ENCODE measurements at regions of chr1 and their contacts with region 1.

Region 1: GRCh38 chr1:162854245-162854882 is 6.6 kb downstream of the CCDC190 start:
- DNase-seq: peak in 4 of 5 donors; percentile 41 to 52 (median 46)
- ATAC-seq: peak in 3 of 4 donors; percentile 37 to 71 (median 58)
- H3K4me3 ChIP-seq: no peak overlapping the region
- H3K27ac ChIP-seq: no peak overlapping the region
- H3K4me1 ChIP-seq: no peaks in the 10 kb centered on the region
- H3K27me3 ChIP-seq: no peaks in the 10 kb centered on the region
- CTCF ChIP-seq: peak; percentile 45 to 81 (median 71)
- POLR2A ChIP-seq: no peak

Region 2: DNA sequence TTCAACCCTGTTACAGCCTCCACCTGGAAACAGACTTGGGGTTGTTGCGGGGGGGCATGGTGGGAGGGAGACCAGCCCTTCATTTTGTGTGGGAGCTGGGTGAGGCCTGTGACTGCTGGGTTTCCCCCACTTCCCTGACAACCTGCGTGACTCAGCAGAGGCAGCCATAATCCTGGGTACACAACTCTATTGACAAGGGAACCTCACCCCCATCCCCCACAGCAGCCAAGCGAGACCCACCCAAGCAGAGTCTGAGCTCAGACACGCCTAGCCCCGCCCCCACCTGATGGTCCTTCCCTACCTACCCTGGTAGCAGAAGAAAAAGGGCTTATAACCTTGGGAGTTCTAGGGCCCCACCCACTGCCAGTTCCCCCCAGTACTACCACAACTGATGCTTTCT is 14.6 kb after region 1 on chr1:
- intact Hi-C with region 1: loop called in 1 of 10 experiments (anchors 1 kb)
- DNase-seq: no peak
- ATAC-seq: no peak
- H3K4me3 ChIP-seq: no peak overlapping the region
- H3K27ac ChIP-seq: no peak overlapping the region
- H3K4me1 ChIP-seq: no peaks in the 10 kb centered on the region
- H3K27me3 ChIP-seq: peaks cover 0 to 4% (median 0%) of the 10 kb centered on the region in 9 donors
- CTCF ChIP-seq: no peak
- POLR2A ChIP-seq: no peak

Region 3: GRCh38 chr1:162905174-162906158 is 51.1 kb after region 1 on chr1:
- intact Hi-C with region 1: no loop called
- DNase-seq: no peak
- ATAC-seq: peak in 2 of 4 donors; percentile 40 to 61
- H3K4me3 ChIP-seq: no peak overlapping the region
- H3K27ac ChIP-seq: peak overlapping the region in 7 of 12 donors; percentile 3 to 62 (median 42)
- H3K4me1 ChIP-seq: peaks cover 0 to 26% (median 7%) of the 10 kb centered on the region in 12 donors
- H3K27me3 ChIP-seq: no peaks in the 10 kb centered on the region
- CTCF ChIP-seq: no peak
- POLR2A ChIP-seq: no peak

Region 4: DNA sequence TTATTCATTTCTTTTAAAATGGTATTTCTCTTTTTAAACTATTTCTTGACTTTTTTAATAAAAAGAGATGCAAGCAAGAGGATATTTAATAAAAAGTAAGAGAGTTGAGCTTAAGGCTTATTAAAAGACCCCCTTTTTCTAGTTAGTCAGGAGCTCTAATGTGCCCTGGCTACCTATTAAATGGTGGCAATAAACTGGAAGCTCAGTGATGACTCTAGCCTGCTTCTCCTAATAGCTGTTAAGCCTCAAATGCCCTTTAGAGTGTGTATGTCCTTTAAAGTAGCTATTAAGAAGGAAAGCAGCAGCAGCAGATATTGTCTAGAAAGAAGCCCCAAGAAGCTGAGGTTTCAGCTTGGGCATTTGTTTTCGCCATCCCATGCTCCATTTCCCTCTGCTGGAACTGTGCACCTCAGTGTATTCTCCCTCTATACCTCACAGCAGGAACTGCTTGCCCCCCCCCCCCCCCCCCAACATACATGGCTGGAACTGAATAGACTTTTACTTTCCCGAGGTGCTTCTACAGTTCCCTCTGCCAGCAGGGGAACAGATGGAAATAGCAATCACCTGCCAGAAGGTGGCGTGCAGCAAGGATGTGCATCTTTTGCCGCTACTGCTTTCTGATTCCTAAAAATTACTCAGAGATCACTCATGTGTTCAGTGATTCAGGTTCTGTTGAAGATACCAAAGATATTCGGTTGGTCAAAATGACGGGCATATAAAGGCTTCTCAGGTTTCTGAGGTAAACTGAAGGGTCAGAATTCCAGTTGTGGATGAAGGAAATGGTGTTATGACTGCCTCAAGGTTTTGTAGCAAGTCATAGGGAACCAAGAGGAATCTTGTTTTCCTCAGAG is 217.3 kb after region 1 on chr1:
- intact Hi-C with region 1: loop called in 1 of 10 experiments (anchors 5 kb)
- DNase-seq: peak in 4 of 5 donors; percentile 41 to 64 (median 62)
- ATAC-seq: peak in 3 of 4 donors; percentile 32 to 76 (median 61)
- H3K4me3 ChIP-seq: peak overlapping the region in 7 of 12 donors; percentile 23 to 65 (median 53)
- H3K27ac ChIP-seq: peak overlapping the region in 4 of 12 donors; percentile 18 to 62 (median 46)
- H3K4me1 ChIP-seq: peaks cover 0 to 5% (median 0%) of the 10 kb centered on the region in 12 donors
- H3K27me3 ChIP-seq: peaks cover 0 to 18% (median 0%) of the 10 kb centered on the region in 9 donors
- CTCF ChIP-seq: peak; percentile 34 to 74 (median 59)
- POLR2A ChIP-seq: no peak

Region 5: GRCh38 chr1:163174524-163175437 is 320.4 kb after region 1 on chr1:
- intact Hi-C with region 1: loop called in 4 of 10 experiments (anchors 2 to 5 kb)
- DNase-seq: peak; percentile 61 to 75 (median 64)
- ATAC-seq: peak in 3 of 4 donors; percentile 72 to 84 (median 75)
- H3K4me3 ChIP-seq: peak overlapping the region in 6 of 12 donors; percentile 4 to 42 (median 27)
- H3K27ac ChIP-seq: peak overlapping the region in 8 of 12 donors; percentile 9 to 74 (median 58)
- H3K4me1 ChIP-seq: peaks cover 0 to 35% (median 6%) of the 10 kb centered on the region in 12 donors
- H3K27me3 ChIP-seq: no peaks in the 10 kb centered on the region
- CTCF ChIP-seq: peak; percentile 72 to 93 (median 86)
- POLR2A ChIP-seq: no peak

Region 6: GRCh38 chr1:163315773-163316374 is 461.5 kb after region 1 on chr1:
- intact Hi-C with region 1: loop called (anchors 1 to 5 kb)
- DNase-seq: peak in 2 of 5 donors; percentile 13 to 30
- ATAC-seq: no peak
- H3K4me3 ChIP-seq: no peak overlapping the region
- H3K27ac ChIP-seq: no peak overlapping the region
- H3K4me1 ChIP-seq: peaks cover 0 to 11% (median 5%) of the 10 kb centered on the region in 12 donors
- H3K27me3 ChIP-seq: no peaks in the 10 kb centered on the region
- CTCF ChIP-seq: peak; percentile 53 to 84 (median 72)
- POLR2A ChIP-seq: no peak

Region 7: DNA sequence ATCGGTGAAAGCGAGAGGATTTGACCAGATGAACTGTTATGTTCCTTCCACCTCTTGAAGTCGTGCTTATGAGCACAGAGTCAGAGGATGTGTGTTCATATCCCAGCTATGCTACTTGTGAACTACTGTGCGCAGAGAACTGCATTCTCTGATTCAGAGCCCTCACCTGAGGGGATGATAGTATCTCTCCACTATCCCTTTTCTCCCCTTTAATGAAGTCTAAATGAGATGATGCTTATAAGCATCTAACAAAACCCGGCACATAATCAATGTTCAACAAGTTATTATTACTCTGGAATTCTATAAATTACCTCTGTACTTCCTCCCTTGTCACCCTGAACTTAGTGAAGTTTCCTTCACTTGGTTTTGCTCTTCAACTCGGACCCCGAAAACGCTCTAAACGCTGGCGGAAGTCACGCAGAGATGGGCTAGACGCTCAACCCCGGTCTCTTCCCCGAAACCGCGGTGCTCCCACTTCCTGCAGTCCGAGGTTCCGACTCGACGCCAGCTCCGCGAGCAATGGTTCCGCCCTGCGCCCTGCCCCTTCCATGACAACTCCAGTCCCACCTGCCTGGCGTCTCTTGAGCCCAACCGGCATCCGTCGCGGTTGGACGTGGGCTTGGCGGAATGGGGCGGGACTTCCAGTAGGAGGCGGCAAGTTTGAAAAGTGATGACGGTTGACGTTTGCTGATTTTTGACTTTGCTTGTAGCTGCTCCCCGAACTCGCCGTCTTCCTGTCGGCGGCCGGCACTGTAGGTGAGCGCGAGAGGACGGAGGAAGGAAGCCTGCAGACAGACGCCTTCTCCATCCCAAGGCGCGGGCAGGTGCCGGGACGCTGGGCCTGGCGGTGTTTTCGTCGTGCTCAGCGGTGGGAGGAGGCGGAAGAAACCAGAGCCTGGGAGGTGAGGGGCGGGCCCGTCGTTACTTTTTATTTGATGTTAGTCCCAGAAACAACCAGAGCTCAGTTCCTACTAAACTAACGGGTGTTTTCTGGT is 467.2 kb after region 1 on chr1 and contains the start of gene NUF2:
- intact Hi-C with region 1: loop called in 7 of 10 experiments (anchors 2 to 5 kb)
- DNase-seq: peak; percentile 97 to 99 (median 98)
- ATAC-seq: peak; percentile 99 to 100 (median 100)
- H3K4me3 ChIP-seq: peak within 1 kb of the TSS; percentile 59 to 85 (median 70)
- H3K27ac ChIP-seq: peak within 1 kb of the TSS in 11 of 12 donors; percentile 42 to 80 (median 75)
- H3K4me1 ChIP-seq: peaks cover 0 to 21% (median 15%) of the 10 kb centered on the region in 12 donors
- H3K27me3 ChIP-seq: no peaks in the 10 kb centered on the region
- CTCF ChIP-seq: peak in 3 of 12 donors; percentile 5 to 25 (median 8)
- POLR2A ChIP-seq: peak in 1 of 2 donors; percentile 44
- total RNA-seq, gene NUF2: 0.20 to 3.2 (median 0.71) TPM in 6 of 9 donors, not detected in the others